HEK293T (cell line): ENCODE measurements at regions of chr7 and their contacts with region 1.

Region 1: GRCh38 chr7:129054438-129055293 is at the start of gene TNPO3:
- DNase-seq: peak; percentile 95

Region 2: DNA sequence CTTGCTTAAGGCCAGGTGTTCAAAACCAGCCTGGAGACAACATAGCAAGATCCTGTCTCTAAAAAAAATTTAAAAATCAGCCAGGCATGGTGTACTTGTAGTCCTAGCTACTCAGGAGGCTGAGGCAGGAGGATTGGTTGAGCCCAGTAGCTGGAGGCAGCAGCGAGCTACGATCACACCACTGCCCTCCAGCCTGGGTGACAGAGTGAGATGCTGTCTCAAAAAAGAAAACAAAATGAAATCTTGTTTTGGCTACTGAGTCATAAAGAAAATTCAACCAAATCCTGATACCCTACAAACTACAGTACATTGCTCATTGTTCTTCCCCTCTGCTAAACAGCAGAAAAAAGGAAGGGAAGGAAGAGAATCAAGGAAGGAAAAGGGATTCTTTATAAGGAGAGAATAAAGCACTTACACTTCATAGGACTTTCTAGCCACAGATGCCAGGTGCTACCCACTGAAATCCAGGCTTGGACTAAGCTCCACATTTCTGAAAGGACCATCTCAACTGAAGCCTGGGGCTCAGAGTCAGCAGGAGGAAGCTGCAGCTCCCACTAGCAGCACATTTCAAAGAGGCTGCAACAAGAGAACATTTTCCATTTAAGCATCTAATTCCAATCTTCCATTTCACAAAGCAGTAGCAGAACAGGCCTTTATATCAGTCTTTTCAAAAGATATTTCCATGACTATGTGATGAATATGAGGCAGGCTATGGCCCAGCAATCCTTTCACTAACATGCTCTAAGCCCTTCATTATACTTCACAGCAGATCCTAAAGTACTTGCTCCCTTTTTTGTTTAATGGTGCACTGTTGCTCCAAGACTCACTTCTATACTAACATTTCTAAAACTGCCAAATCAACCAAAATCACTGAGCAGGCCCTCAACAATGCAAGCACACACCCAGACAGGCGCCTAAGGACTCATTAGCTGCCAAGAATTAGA is 13.3 kb before region 1 on chr7:
- CTCF ChIA-PET with region 1: no interaction called
- POLR2A ChIA-PET with region 1: interaction called, 12 read pairs
- DNase-seq: no peak

Region 3: DNA sequence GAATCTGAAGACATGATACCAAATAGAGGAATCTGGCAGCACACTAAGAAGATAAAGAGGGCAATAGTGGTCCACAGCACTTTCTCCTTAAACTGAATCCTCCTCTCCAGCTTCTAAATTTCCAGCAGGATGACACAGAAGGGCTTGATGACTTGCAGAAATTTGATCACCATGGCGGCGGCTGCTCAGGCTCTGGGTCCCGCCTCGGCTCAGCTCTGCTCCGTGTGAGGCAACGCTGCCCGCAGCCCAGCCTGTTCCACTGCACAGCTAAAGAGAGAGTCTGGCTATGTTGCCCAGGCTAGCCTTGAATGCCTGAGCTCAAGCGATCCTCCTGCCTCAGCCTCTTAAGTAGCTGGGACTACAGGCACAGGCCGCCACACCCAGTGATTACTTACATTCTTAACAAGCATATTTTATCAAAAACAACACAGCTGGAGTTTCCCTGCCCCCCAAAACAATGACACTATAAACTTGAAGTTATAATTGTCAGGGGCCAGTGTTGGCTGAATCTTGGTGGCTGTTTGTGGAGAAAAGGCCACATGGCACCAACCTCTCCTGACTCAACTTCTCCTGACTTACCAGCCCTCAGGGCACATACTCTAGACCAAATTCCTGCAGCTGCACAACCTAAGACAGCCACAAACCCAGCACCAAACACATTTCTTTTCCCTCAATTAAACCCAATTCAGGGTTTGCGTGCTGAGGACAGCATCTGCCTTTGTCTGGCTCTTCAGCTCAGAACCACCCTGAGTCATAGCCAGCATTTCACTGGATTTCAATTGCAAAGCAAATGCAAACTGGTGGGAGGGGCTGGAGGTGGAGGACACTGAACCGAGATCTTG is 11.8 kb after region 1 on chr7:
- CTCF ChIA-PET with region 1: interaction called, 7 read pairs
- POLR2A ChIA-PET with region 1: interaction called, 73 read pairs
- DNase-seq: peak; percentile 27

Region 4: DNA sequence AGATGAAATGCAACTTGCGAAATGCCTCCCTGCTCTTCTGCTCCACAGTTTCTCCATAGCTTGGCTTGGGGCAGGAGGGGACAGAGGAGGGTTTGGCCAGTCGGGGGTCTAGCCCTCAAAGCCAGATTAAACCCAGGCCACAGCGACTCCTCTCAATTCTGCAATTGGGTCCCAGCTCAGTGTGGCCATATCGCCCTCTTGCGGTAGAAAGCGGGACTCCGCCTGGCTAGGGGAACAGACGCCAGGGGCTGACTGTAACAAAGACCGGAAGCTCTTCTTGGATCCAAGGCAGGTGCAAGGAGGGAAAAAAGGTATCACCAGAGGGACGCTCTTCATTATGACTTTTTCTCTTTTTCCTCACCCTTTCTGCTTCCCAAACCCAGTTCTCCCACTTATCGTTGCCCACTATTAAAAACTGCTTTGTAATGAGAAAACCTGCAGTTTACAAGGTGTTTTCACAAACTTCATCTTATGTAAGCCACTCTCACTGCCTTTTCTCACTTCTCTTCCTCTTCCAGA is 36.9 kb after region 1 on chr7:
- CTCF ChIA-PET with region 1: no interaction called
- POLR2A ChIA-PET with region 1: interaction called, 11 read pairs
- DNase-seq: peak; percentile 88